CD4-positive, alpha-beta memory T cell (primary cell): ENCODE measurements at regions of chr3 and their contacts with region 1.

Region 1: DNA sequence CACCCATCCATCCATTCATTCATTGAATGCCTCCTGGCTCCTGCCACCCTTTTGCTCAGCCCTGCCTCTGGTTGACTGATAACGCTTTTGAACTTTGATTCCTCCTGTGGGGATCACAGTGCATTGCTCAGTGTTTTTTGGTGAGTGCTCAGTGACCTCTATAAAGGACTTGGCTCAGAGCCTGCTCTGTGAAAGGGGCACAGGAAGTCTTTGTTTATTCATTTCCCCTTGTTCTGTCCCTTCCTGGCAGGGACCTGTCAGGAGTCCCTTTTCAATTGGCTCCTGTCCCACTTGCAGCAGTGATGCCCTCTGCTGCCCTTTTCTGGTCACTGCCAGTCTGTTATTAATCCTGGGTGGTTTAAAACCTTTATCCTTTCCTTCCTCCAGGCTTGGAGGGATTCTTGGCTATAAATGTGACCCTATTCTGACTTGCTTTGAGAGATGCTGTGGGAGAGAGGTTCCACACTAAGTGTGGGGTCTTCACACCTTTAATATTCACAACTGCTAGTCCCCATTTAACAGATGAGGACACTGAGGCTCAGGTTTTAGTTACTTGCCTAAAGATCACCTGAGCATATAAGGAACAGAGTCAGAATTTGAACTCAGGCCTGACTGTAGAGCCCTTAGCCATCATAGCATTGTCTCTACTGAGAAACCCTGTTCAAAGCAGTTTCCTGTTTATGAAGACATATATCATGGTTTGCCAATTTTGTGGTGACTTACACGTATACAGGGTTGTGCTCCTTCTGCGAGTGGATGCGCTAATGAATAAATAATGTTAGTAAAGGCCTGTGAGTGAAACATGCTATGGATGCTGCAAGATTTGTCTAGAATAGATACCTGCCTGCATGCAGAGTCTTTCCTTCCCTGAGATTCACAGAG is 23.2 kb upstream of the TATDN2 start:
- DNase-seq: peak; percentile 59 to 67 (median 60)
- H3K4me3 ChIP-seq: no peak overlapping the region
- H3K4me3 Mint-ChIP-seq: peak overlapping the region in 7 of 8 donors; percentile 49 to 83 (median 65)
- H3K27ac ChIP-seq: no peak overlapping the region
- H3K27ac Mint-ChIP-seq: peak overlapping the region; percentile 70 to 95 (median 91)
- H3K4me1 ChIP-seq: peaks cover 76% of the 10 kb centered on the region
- H3K4me1 Mint-ChIP-seq: peaks cover 47 to 79% (median 59%) of the 10 kb centered on the region in 4 donors
- H3K27me3 ChIP-seq: no peaks in the 10 kb centered on the region
- H3K27me3 Mint-ChIP-seq: no peaks in the 10 kb centered on the region

Region 2: DNA sequence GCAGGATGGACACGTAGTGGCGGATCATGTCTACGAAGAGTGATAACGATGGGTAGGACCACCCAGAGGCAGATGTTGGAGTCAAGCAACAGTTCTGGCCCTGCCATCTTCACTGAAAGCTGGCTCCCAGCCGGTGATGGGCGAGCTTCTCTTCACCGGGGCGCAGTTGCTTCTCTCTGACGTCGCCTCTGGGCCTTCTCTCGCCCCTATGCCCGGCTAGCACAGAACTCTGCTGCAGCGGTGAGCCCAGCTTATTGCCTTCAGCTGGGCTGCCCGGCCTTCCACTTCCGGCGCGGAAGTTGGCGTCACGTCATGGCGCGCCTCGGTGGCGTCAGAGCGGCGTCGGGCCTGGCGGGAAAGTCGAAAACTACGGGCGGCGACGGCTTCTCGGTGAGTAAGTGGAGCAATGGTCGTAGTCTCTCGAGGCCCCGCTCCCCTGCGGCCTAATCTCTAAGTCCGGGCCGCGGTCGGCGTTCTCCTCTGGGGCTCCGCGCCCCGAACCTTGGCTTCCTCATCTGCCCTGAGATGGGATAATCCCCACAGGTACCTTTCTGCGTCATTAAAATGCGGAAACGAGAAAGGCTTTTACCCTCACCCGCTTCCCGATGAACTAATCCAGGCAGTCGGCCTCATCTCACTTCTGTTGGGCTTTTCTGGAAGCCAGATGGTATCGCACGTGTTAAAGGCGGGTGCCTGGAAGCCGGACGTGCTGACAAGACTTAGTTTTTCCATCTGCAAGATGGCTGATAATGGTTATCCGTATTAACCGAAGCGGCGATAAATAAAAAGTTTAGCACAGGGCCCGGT is 198.7 kb before region 1 on chr3 and contains the start of gene FANCD2:
- CTCF ChIA-PET with region 1: no interaction called
- POLR2A ChIA-PET with region 1: interaction called, 4 read pairs
- intact Hi-C with region 1: loop called (anchors 1 kb)
- DNase-seq: peak; percentile 91 to 96 (median 91)
- H3K4me3 ChIP-seq: peak within 1 kb of the TSS; percentile 84 to 88
- H3K4me3 Mint-ChIP-seq: peak within 1 kb of the TSS; percentile 94 to 99 (median 96)
- H3K27ac ChIP-seq: peak within 1 kb of the TSS; percentile 87
- H3K27ac Mint-ChIP-seq: peak within 1 kb of the TSS; percentile 97 to 99 (median 98)
- H3K4me1 ChIP-seq: peaks cover 25% of the 10 kb centered on the region
- H3K4me1 Mint-ChIP-seq: peaks cover 9 to 43% (median 19%) of the 10 kb centered on the region in 4 donors
- H3K27me3 ChIP-seq: no peaks in the 10 kb centered on the region
- H3K27me3 Mint-ChIP-seq: no peaks in the 10 kb centered on the region
- total RNA-seq, gene FANCD2: 28.1 to 28.3 TPM

Region 3: GRCh38 chr3:10142707-10143566 is 82.1 kb before region 1 on chr3:
- CTCF ChIA-PET with region 1: interaction called, 4 read pairs
- POLR2A ChIA-PET with region 1: interaction called, 19 read pairs
- intact Hi-C with region 1: loop called (anchors 1 kb)
- DNase-seq: peak in 3 of 5 donors; percentile 14 to 46 (median 18)
- H3K4me3 ChIP-seq: peak overlapping the region; percentile 55 to 95
- H3K4me3 Mint-ChIP-seq: peak overlapping the region; percentile 90 to 98 (median 95)
- H3K27ac ChIP-seq: peak overlapping the region; percentile 94
- H3K27ac Mint-ChIP-seq: peak overlapping the region; percentile 88 to 99 (median 96)
- H3K4me1 ChIP-seq: peaks cover 45% of the 10 kb centered on the region
- H3K4me1 Mint-ChIP-seq: peaks cover 22 to 58% (median 32%) of the 10 kb centered on the region in 4 donors
- H3K27me3 ChIP-seq: no peaks in the 10 kb centered on the region
- H3K27me3 Mint-ChIP-seq: no peaks in the 10 kb centered on the region

Region 4: DNA sequence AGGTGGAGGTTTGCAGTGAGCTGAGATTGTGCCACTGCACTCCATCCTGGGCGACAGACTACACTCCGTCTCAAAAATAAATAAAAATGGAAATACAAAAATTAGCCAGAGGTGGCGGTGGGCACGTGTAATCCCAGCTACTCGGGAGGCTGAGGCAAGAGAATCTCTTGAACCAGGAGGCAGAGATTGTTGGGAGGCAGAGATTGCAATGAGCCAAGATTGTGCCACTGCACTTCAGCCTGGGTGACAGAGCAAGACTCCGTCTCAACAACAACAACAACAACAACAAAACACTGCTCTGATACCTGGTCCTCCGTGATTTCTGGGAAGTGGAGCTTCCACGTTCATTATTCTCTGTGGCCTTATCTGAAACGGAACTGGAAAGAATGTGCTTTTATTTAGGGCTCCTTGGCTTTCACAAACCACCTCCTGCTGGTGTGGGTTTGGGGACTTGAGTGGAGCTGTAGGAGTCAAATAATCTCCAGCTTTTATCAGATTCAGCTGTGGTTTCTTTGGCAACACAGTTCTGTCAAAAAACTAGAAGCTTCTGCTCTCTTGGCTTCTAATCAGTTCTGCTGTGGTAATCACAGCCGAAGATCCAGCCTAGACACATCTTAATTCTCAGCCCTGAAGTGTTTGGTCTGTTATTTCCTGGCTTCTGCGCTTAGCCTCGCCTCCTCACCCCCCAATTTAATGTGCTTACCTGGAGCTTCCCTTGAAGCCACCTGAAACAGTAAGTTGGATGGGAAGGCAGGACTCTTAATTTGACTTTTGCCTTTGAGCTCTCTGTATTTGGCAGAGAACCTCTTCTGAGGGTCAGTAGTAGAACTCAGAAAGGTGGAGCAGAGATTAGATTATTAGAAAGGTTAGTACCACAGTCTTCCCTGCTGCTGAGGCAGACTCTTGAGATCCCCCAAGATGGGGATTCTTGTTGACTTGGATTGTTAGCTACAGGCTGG is 38.9 kb before region 1 on chr3:
- CTCF ChIA-PET with region 1: interaction called, 15 read pairs
- POLR2A ChIA-PET with region 1: interaction called, 80 read pairs
- intact Hi-C with region 1: no loop called
- DNase-seq: peak in 4 of 5 donors; percentile 47 to 66 (median 50)
- H3K4me3 ChIP-seq: peak overlapping the region in 1 of 2 donors; percentile 10
- H3K4me3 Mint-ChIP-seq: peak overlapping the region; percentile 58 to 85 (median 75)
- H3K27ac ChIP-seq: peak overlapping the region; percentile 51
- H3K27ac Mint-ChIP-seq: peak overlapping the region; percentile 82 to 97 (median 94)
- H3K4me1 ChIP-seq: peaks cover 54% of the 10 kb centered on the region
- H3K4me1 Mint-ChIP-seq: peaks cover 41 to 62% (median 51%) of the 10 kb centered on the region in 4 donors
- H3K27me3 ChIP-seq: no peaks in the 10 kb centered on the region
- H3K27me3 Mint-ChIP-seq: no peaks in the 10 kb centered on the region

Region 5: GRCh38 chr3:10198761-10199649 is 26.0 kb before region 1 on chr3:
- CTCF ChIA-PET with region 1: interaction called, 20 read pairs
- POLR2A ChIA-PET with region 1: interaction called, 80 read pairs
- intact Hi-C with region 1: loop called (anchors 2 kb)
- DNase-seq: peak; percentile 76 to 95 (median 80)
- H3K4me3 ChIP-seq: peak overlapping the region; percentile 2 to 21
- H3K4me3 Mint-ChIP-seq: peak overlapping the region in 7 of 8 donors; percentile 55 to 79 (median 73)
- H3K27ac ChIP-seq: peak overlapping the region; percentile 88
- H3K27ac Mint-ChIP-seq: peak overlapping the region; percentile 95 to 99 (median 97)
- H3K4me1 ChIP-seq: peaks cover 84% of the 10 kb centered on the region
- H3K4me1 Mint-ChIP-seq: peaks cover 42 to 81% (median 63%) of the 10 kb centered on the region in 4 donors
- H3K27me3 ChIP-seq: no peaks in the 10 kb centered on the region
- H3K27me3 Mint-ChIP-seq: no peaks in the 10 kb centered on the region

Region 6: GRCh38 chr3:10242182-10243065 is 17.4 kb after region 1 on chr3:
- CTCF ChIA-PET with region 1: interaction called, 3 read pairs
- POLR2A ChIA-PET with region 1: interaction called, 14 read pairs
- intact Hi-C with region 1: loop called (anchors 2 kb)
- DNase-seq: peak; percentile 80 to 94 (median 83)
- H3K4me3 ChIP-seq: peak overlapping the region; percentile 34 to 36
- H3K4me3 Mint-ChIP-seq: peak overlapping the region; percentile 77 to 90 (median 80)
- H3K27ac ChIP-seq: peak overlapping the region; percentile 47
- H3K27ac Mint-ChIP-seq: peak overlapping the region; percentile 89 to 97 (median 95)
- H3K4me1 ChIP-seq: peaks cover 54% of the 10 kb centered on the region
- H3K4me1 Mint-ChIP-seq: peaks cover 37 to 67% (median 53%) of the 10 kb centered on the region in 4 donors
- H3K27me3 ChIP-seq: no peaks in the 10 kb centered on the region
- H3K27me3 Mint-ChIP-seq: no peaks in the 10 kb centered on the region

Region 7: DNA sequence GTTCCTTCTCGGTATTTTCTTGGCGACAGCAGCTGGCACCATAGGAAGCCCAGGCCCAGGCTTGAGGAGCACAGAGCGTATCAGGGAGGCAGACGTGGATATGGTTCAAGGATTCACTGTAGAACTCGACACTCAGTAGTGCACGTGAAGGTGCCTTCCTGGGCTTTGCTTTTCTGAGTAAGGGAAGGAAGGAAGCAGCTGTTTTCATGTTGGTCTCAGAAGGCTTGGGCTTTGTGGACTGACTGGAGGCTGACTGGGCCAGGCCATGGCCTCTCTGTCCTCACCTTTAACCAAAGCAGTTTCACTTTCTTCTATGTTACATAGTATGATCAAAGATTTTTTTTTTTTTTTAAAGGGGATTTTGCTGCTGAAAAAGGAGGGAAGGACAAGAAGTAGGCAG is 74.7 kb after region 1 on chr3:
- CTCF ChIA-PET with region 1: no interaction called
- POLR2A ChIA-PET with region 1: no interaction called
- intact Hi-C with region 1: no loop called
- DNase-seq: no peak
- H3K4me3 ChIP-seq: no peak overlapping the region
- H3K4me3 Mint-ChIP-seq: no peak overlapping the region
- H3K27ac ChIP-seq: no peak overlapping the region
- H3K27ac Mint-ChIP-seq: peak overlapping the region in 5 of 7 donors; percentile 57 to 89 (median 82)
- H3K4me1 ChIP-seq: no peaks in the 10 kb centered on the region
- H3K4me1 Mint-ChIP-seq: peaks cover 2 to 13% (median 9%) of the 10 kb centered on the region in 4 donors
- H3K27me3 ChIP-seq: no peaks in the 10 kb centered on the region
- H3K27me3 Mint-ChIP-seq: no peaks in the 10 kb centered on the region